GM10248 (cell line): ENCODE measurements at regions of chr12 and their contacts with region 1.

Region 1: DNA sequence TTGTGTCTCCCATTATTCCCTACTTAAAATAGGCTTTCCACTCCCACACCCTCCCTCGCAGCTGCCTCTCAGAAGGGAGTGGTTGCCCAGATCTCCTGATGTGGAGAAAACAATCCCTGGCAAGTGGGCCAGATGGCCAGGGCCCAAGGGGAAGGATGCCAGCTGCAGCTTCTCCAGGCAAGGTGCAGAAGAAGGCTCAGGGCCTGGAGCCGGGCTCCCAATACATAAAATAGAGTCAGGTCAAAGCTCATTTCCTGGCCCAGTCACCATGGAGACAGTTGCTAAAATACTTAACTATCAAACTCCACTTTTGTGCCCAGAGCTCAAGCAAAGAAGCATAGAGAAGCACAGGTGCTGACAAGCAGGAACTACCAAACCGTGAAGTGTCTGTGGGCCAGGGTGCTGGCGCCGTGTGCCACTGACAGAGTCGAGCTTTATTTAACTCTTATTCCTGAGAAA is 45.7 kb upstream of the ITPR2 start:
- DNase-seq: peak; percentile 56
- CTCF ChIP-seq: no peak

Region 2: DNA sequence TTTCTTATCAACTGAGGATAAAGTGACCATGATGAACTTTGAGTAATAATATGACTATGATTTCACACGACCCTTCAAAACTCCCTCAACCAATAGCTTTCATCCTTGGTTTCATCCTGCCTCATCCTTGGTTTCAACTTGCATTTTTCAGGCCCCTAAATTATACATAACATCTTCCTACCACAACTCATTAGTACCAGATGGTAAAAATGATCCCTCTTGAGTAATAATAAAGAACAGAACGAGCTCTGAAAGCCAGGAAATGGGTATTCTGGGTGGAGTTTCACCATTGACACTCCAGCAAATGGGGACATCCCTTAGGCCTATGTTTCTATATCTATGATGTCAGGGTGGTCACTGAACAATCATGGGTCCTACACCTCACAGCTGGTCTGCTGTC is 1253.5 kb before region 1 on chr12:
- CTCF ChIA-PET with region 1: no interaction called
- POLR2A ChIA-PET with region 1: no interaction called
- DNase-seq: no peak
- CTCF ChIP-seq: no peak

Region 3: DNA sequence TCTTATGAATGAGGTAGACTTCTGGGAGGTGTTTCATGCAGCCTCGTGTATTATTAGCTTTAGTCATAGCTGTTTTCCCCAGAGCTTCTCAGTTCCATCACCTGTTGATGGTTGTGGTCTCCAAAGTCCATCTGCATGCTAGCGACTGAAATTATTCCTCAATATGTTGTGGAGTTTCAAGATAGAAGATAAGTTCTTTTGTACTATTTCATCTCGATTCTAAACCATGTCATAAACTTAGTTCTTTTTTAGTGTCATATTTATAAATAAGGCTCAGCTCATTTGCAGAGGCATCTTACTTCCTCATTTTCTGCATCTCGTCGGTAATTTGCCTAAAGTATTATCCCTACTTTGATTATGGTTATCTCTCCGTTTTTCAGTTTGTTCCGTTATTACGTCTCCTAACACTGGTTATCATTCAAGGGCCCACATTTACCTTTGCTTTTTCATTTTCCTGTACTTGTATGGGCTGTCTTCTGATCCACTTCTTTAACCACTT is 164.8 kb before region 1 on chr12:
- CTCF ChIA-PET with region 1: no interaction called
- POLR2A ChIA-PET with region 1: no interaction called
- DNase-seq: peak; percentile 29
- CTCF ChIP-seq: no peak

Region 4: DNA sequence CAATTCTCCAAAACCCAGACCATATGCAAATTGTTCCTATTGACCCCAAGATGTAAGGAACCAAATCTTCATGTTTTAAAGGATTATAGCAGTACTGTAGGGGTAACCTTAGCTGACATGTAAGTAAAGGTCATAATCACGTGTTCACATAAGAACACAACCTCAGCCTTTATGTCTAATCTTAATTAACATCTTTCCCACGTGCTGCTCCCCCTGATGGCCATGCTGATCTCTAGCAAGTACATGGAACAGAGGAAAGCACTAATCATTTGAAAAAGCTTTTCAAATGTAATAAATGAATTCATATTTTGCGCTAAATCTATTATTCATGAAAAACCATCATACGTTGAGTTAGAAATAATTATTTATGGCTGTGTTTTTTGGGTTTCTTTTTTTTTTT is 15.2 kb before region 1 on chr12:
- CTCF ChIA-PET with region 1: interaction called, 81 read pairs
- POLR2A ChIA-PET with region 1: interaction called, 3 read pairs
- DNase-seq: no peak
- CTCF ChIP-seq: no peak

Region 5: GRCh38 chr12:26891704-26892103 is 13.0 kb after region 1 on chr12:
- CTCF ChIA-PET with region 1: interaction called, 56 read pairs
- POLR2A ChIA-PET with region 1: no interaction called
- DNase-seq: no peak
- CTCF ChIP-seq: no peak

Region 6: DNA sequence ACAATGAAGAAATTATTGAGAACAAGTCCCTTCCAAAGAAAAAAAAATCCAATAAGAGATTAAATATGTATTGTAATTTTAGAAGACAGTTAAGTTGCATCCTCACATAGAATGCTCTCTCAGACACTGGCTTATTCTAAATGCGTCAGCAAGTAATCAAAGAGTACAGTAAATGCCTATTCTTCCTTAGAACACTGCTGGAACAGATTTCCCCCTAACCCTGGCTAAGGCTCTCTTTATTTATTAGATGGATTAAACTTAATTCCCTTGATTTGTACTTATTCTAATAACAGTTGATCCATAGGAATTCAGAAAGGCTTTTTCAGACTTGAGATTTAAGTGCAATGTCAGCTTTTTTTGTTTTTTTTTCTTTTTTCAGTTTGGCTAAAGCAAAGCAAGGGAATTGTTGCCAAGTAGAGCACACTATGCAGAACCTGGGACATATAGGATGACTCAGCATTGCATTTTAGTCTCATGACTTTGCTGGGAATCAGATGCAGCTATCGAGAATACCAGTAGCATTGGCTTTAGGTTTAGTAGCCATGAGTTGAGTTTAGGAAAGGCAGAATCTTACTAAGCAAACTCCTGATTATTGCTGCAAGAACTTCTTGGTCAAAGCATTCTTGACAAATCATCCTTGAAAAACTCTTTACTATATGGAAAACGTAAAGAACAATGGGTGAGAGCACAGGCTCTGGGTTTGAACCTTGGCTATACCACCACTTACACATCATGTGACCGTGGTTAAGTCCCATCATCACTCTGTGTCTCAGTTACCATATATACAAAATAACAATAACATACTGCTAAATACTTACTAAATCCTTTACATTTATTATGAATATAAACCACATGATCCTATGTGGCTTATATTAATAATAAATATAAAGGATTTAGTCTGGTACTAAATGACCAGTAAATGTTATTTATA is 170.4 kb after region 1 on chr12:
- CTCF ChIA-PET with region 1: no interaction called
- POLR2A ChIA-PET with region 1: no interaction called
- DNase-seq: no peak
- CTCF ChIP-seq: no peak